Posterior vena cava (tissue), 2 donors: ENCODE measurements at regions of chr16 and their contacts with region 1.

Region 1: DNA sequence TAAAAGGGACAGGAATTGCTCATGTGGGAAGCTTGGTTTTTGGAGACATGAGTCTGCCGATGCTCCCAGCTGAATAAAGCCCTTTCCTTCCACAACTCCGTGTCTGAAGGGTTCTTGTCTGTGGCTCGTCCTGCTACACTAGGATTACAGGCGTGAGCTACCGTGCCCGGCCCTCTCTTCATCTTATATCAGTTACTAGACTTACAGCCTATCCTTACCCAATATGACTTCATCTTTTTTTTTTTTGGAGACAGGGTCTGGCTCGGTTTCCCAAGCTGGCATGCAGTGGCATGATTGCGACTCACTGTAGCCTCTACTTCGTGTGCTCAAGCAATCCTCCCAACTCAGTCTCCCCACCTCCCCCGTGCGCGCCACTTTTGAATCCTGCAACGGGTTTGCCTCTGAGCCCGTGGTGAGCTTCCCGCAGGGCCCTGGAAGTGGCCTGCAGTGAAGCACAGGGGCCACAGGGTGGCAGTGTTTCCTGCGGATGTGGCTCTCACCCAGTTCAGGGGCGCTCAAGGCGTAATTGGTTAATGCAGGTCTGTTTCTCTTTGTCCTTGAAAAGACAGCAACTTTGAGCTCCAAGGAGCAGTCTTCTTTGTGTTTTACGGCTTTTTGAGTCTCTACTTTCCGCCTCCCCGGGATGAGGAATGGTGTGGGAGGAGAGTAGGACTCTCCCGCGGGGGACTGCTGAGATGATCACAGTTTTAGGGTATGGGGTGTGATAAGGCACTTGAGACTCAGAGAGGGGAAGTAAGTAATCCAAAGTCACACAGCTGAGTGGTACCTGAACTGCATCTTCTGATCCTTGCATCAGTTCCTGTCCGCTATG is 22.7 kb upstream of the GPRC5B start:
- DNase-seq: peak; percentile 89

Region 2: GRCh38 chr16:20383106-20384029 is 476.0 kb after region 1 on chr16:
- intact Hi-C with region 1: loop called in 1 of 2 experiments (anchors 10 kb)
- DNase-seq: no peak

Region 3: DNA sequence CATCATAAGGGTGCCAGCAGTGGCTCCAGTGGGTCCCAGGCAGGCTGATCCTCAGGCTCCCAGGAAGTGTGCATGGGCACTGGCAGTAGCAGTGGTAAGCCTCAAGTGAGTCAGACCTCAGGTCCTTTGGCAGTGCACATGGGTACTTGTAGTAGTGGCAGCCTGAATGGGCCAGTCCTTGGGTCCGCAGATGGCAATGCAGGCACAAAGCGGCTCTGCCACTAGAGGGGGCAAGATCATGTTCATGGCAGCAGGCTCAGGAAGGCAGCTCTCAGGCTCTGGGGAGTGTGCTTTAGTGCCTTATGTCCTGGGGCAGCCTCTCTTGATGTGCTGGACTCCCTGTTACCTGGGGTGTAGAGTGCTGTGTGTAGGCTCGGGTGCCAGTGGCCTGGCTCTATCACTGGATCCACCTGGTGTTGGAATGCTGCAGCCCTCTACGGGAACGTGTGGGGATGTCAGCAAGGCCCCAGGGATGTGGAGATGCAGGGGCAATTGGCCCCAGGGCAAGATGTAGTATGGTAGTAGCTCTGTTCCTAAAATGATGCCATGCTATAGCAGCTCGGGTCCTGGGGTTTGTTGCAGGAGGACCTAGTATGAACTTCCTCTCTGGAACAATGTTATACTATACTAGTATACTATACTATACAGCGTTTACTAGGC is 867.5 kb after region 1 on chr16:
- intact Hi-C with region 1: no loop called
- DNase-seq: no peak